Transverse colon (tissue), 4 donors: ENCODE measurements at regions of chrX and their contacts with region 1.

Region 1: DNA sequence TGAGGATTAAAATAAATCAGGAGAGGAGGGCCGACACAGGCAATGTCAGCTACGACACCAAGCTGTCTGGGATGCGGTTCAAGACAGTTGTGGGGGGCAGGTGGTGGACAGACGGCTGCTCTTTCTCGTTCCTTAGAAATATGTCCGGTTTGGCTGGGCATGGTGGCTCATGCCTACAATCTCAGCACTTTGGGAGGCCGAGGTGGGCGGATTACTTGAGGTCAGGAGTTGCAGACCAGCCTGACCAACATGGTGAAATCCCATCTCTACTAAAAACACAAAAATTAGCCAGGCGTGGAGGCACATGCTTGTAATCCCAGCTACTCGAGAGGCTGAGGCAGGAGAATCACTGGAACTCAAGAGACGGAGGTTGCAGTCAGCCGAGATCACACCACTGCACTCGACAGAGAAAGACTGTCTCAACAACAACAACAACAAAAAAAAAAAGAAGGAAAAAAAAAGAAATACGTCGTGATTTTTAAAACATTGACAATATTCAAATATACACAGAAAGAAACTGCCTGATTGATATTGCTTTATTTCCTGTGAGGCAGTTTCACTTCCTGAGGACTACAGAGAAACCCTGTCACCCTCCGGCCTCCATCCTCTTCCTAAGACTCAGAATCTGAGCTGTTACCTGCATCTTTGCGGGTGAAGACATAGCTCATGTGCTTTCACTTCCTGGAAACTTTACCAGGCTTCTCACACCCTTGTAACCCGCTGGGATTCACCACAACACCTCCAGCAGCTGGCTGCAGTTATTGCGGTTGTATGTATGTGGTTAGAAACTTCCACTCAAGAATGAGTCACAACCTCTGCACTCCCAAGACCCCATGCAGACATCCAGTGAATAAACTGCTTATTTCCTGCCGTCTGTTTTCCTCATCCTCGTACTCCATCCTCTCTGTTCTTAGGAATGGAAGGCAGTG is 63.8 kb upstream of the STS start:
- DNase-seq: peak; percentile 38
- H3K4me3 ChIP-seq: no peak overlapping the region
- H3K27ac ChIP-seq: no peak overlapping the region
- H3K4me1 ChIP-seq: no peaks in the 10 kb centered on the region
- H3K27me3 ChIP-seq: no peaks in the 10 kb centered on the region
- CTCF ChIP-seq: no peak
- EP300 ChIP-seq: no peak
- POLR2A ChIP-seq: no peak

Region 2: GRCh38 chrX:7110821-7111276 is 27.1 kb after region 1 on chrX:
- in situ Hi-C with region 1: no loop called
- intact Hi-C with region 1: loop called (anchors 1 kb)
- DNase-seq: no peak
- H3K4me3 ChIP-seq: no peak overlapping the region
- H3K27ac ChIP-seq: peak overlapping the region in 2 of 4 donors; percentile 50 to 60
- H3K4me1 ChIP-seq: peaks cover 11 to 28% (median 19%) of the 10 kb centered on the region in 4 donors
- H3K27me3 ChIP-seq: no peaks in the 10 kb centered on the region
- CTCF ChIP-seq: no peak
- EP300 ChIP-seq: no peak
- POLR2A ChIP-seq: no peak